Prostate gland (tissue), 2 donors: ENCODE measurements at regions of chr6 and their contacts with region 1.

Region 1: DNA sequence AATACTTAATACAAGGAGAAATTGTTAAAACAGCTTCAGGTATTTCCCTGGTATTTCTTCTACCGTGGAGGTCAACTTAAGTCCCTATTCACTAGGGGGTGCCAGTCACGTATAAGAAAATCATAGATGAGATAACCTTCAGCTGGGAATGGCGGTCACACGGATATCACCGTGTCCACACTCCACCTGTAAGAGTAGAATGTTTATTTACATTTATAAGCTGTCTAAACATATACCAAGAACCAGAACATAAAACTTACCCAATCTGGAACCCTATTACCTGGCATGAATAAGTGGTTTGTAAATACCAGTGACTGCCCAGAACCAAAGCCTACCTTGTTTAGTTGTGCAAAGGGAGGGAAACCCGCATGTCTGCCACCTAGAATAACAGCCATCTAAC is 1.9 kb upstream of the ELOVL4 start:
- DNase-seq: peak; percentile 59
- H3K4me3 ChIP-seq: no peak overlapping the region
- H3K27ac ChIP-seq: no peak overlapping the region
- H3K4me1 ChIP-seq: no peaks in the 10 kb centered on the region
- H3K27me3 ChIP-seq: no peaks in the 10 kb centered on the region
- CTCF ChIP-seq: peak; percentile 37 to 69 (median 50)
- POLR2A ChIP-seq: no peak

Region 2: DNA sequence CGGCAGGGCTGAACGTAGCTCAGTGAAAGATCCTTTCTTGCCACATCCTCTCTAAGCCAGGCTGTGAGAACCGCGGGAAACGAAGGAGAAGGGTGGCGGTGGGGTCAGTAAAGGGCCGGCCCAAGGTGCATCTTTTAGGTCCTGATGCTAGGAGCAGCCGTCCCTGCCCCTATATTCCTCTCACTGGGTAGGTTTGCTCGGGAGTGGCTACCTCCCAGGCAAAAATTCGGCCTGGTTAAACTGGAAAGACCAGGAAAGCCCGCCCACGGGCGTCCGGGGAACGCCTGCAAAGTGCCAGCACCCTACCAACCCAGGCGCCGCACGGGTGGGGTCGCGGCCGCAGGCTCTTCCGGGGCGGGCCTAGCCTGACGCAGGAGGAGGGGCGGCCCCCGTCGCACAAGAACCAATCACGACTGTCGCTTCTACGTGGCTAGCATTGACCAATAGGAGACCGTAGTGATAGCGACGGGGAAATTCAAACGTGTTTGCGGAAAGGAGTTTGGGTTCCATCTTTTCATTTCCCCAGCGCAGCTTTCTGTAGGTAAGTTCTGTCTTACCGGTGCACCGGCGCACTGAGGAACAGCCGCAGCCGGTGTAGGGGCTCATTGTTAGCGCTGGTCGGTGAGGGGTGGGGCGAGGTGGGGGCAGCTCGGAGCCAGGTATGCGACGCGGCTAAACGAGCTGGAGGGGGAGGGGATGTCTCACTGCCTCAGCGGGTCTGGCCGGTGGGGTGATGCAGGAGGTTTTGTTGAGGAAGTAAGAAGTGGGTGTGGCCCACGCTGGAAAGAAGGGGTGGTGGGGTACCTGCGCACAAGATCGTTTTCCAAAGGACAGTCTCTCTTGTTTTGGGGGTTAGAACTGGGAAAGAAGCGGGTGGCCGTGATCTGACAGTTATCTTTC is 55.2 kb after region 1 on chr6 and contains the start of gene TTK:
- intact Hi-C with region 1: loop called (anchors 2 kb)
- DNase-seq: peak; percentile 94
- H3K4me3 ChIP-seq: peak within 1 kb of the TSS; percentile 38 to 50
- H3K27ac ChIP-seq: peak within 1 kb of the TSS; percentile 79 to 87
- H3K4me1 ChIP-seq: no peaks in the 10 kb centered on the region
- H3K27me3 ChIP-seq: no peaks in the 10 kb centered on the region
- CTCF ChIP-seq: peak in 1 of 4 experiments; percentile 1
- POLR2A ChIP-seq: peak; percentile 61
- total RNA-seq, gene TTK: 4.3 to 16.4 TPM

Region 3: GRCh38 chr6:80094017-80094416 is 144.8 kb after region 1 on chr6:
- intact Hi-C with region 1: loop called (anchors 5 kb)
- DNase-seq: no peak
- H3K4me3 ChIP-seq: no peak overlapping the region
- H3K27ac ChIP-seq: no peak overlapping the region
- H3K4me1 ChIP-seq: no peaks in the 10 kb centered on the region
- H3K27me3 ChIP-seq: no peaks in the 10 kb centered on the region
- CTCF ChIP-seq: peak; percentile 14 to 66 (median 49)
- POLR2A ChIP-seq: no peak